Activated CD4-positive, alpha-beta T cell treated with anti-CD3 and anti-CD28 coated beads for 36 hours (primary cell): ENCODE measurements at regions of chr17 and their contacts with region 1.

Region 1: GRCh38 chr17:41665566-41666236 is 23.0 kb upstream of the EIF1 start:
- DNase-seq: peak; percentile 95
- ATAC-seq: peak; percentile 85
- H3K4me3 Mint-ChIP-seq: peak overlapping the region; percentile 78
- H3K27ac Mint-ChIP-seq: peak overlapping the region; percentile 95
- H3K4me1 Mint-ChIP-seq: peaks cover 42% of the 10 kb centered on the region
- H3K27me3 Mint-ChIP-seq: peaks cover 3% of the 10 kb centered on the region

Region 2: GRCh38 chr17:40818733-40819527 is 846.8 kb before region 1 on chr17:
- CTCF ChIA-PET with region 1: interaction called, 5 read pairs
- POLR2A ChIA-PET with region 1: no interaction called
- intact Hi-C with region 1: loop called in 1 of 2 experiments (anchors 2 kb)
- DNase-seq: peak; percentile 91
- ATAC-seq: peak; percentile 84
- H3K4me3 Mint-ChIP-seq: peak overlapping the region; percentile 95
- H3K27ac Mint-ChIP-seq: peak overlapping the region; percentile 97
- H3K4me1 Mint-ChIP-seq: peaks cover 25% of the 10 kb centered on the region
- H3K27me3 Mint-ChIP-seq: peaks cover 1% of the 10 kb centered on the region

Region 3: DNA sequence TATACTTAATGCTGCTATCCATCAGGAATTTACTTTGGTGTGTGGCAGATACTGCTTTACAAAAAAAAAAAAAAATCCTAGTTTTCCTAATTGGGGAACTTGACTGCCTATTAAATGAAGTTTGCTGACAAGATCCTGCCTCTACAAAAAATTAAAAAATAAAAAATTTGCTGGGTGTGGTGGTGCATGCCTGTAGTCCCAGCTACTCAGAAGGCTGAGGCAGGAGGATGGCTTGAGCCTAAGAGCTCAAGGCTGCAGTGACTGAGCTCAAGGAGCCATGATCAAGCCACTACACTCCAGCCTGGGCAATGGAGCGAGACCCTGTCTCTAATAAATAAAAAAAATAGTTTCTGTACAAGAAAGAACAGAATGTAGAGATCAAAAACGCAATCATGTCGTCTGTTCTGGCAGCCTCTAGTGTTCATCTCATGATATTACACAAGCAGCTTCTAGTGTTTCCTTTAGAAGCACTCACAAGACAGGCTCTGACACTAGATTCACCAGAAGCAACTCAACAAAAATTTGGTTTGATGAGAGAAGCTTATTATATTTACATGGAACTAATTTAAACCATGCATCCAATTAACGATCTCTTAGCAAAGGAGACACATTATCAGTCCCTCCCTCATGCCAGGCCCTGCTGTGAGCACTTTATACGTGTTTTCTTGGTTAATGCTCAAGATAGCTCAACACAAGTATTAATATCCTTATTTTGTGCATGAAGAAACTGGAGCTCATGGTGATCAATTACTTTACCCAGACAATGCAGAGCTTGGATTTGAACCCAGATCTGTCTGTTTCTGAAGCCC is 343.4 kb before region 1 on chr17:
- CTCF ChIA-PET with region 1: no interaction called
- POLR2A ChIA-PET with region 1: no interaction called
- intact Hi-C with region 1: loop called in 1 of 2 experiments (anchors 5 kb)
- DNase-seq: no peak
- ATAC-seq: peak; percentile 81
- H3K4me3 Mint-ChIP-seq: no peak overlapping the region
- H3K27ac Mint-ChIP-seq: no peak overlapping the region
- H3K4me1 Mint-ChIP-seq: peaks cover 28% of the 10 kb centered on the region
- H3K27me3 Mint-ChIP-seq: no peaks in the 10 kb centered on the region

Region 4: GRCh38 chr17:41486809-41487720 is 178.6 kb before region 1 on chr17:
- CTCF ChIA-PET with region 1: no interaction called
- POLR2A ChIA-PET with region 1: no interaction called
- intact Hi-C with region 1: loop called in 1 of 2 experiments (anchors 1 kb)
- DNase-seq: peak; percentile 73
- ATAC-seq: peak; percentile 44
- H3K4me3 Mint-ChIP-seq: no peak overlapping the region
- H3K27ac Mint-ChIP-seq: no peak overlapping the region
- H3K4me1 Mint-ChIP-seq: peaks cover 8% of the 10 kb centered on the region
- H3K27me3 Mint-ChIP-seq: no peaks in the 10 kb centered on the region

Region 5: DNA sequence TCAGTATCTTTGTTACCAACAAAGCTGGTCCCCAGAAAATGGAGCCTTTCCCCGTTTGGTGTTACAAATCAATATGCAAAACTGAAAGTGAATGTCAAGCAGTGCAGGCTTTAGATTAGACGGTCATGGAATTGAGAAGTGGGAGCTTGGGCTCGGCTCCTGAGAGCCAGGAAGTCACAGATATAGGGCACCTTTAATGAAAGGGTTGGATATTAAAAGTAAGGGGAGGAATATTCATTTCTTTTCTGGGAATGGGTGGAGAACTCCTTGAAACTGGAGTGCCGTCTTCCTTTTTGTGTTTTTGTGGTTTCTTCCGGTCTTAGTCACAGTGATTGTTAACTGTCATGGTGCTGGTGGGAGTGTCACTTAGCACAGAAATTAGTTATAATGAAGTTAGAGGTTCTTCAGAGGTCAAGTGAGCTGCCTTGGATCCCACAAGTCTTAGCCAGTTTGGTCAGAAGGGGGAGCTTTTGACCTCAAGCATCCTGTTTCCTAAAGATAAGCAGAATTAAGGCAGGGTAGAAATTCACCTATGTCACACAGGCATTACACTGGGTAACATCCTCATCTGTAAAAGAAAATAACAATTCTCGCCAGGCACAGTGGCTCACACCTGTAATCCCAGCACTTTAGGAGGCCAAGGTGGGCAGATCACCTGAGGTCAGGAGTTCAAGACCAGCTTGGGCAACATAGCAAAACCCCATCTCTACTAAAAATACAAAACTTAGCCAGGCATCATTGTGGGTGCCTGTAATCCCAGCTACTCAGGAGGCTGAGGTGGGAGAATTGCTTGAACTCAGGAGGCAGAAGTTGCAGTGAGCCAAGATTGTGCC is 13.4 kb after region 1 on chr17:
- CTCF ChIA-PET with region 1: interaction called, 73 read pairs
- POLR2A ChIA-PET with region 1: interaction called, 12 read pairs
- intact Hi-C with region 1: loop called (anchors 1 kb)
- DNase-seq: peak; percentile 79
- ATAC-seq: peak; percentile 91
- H3K4me3 Mint-ChIP-seq: peak overlapping the region; percentile 72
- H3K27ac Mint-ChIP-seq: peak overlapping the region; percentile 94
- H3K4me1 Mint-ChIP-seq: peaks cover 32% of the 10 kb centered on the region
- H3K27me3 Mint-ChIP-seq: no peaks in the 10 kb centered on the region